Heart right ventricle (tissue), 16 donors: ENCODE measurements at regions of chr16 and their contacts with region 1.

Region 1: DNA sequence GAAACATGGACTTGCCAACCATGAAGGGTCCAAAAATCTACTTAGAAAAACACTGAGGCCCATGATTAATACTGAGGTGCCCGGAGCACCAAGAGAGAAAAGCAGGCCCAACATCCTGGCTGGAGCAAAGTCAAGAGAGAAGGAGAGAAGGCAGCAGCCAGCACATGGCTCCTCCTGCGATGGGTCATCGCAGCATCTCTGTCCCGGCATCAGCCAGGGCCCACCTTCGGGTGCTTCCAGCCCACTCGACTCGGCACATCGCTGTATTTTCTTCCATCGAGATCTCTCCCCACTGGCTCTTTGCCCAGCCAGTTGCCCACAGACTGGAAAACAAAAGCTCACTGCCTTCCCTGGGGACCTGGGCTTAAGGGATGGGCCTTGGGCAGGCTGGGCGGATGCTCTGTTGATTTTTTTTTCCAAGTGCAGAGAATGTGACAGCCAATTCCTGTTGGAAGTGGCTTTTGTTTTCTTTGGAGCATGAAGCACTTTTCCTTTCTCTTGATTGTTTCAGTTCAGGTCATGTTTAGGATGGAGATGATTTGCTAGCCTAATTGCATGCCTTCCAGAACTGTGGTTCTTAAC is 58.1 kb downstream of the CYB5B start:
- DNase-seq: peak; percentile 66 to 85
- ATAC-seq: peak; percentile 80 to 95 (median 87)
- H3K4me3 ChIP-seq: peak overlapping the region in 7 of 10 donors; percentile 17 to 45 (median 32)
- H3K27ac ChIP-seq: peak overlapping the region; percentile 14 to 94 (median 85)
- H3K4me1 ChIP-seq: peaks cover 2 to 33% (median 24%) of the 10 kb centered on the region in 9 donors
- H3K27me3 ChIP-seq: peaks cover 0 to 58% (median 0%) of the 10 kb centered on the region in 7 donors
- CTCF ChIP-seq: peak in 1 of 9 donors; percentile 0

Region 2: DNA sequence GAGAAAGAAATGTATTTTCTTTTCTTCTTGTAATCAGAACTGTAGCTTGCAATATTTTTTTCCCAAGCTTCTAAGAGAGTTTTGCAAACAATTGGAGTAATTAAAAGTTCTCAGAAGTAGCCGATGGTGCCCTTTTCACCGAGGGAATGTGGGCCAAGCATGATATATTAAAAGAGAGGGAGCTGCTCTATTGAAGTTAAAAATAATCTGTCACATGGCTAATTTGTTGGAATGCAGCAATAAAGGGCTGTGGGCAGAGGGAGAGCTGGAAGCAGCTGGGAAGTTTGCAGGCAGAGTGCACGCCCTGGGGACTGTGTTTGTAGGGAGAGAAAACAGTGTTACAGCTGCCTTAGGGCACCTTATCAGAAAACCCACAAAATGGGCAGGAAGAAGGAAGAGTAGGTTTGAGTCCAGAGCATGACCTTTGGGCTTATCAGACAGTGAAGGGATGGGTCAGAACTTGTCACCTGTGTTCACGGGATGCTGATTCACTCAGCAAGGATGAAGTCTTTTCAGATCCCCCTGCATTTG is 78.2 kb before region 1 on chr16:
- intact Hi-C with region 1: loop called in 2 of 10 experiments (anchors 2 to 10 kb)
- DNase-seq: peak in 1 of 2 donors; percentile 27
- ATAC-seq: peak; percentile 65 to 87 (median 80)
- H3K4me3 ChIP-seq: peak overlapping the region in 2 of 10 donors; percentile 8 to 25
- H3K27ac ChIP-seq: peak overlapping the region; percentile 38 to 81 (median 73)
- H3K4me1 ChIP-seq: peaks cover 5 to 50% (median 20%) of the 10 kb centered on the region in 9 donors
- H3K27me3 ChIP-seq: no peaks in the 10 kb centered on the region
- CTCF ChIP-seq: no peak

Region 3: DNA sequence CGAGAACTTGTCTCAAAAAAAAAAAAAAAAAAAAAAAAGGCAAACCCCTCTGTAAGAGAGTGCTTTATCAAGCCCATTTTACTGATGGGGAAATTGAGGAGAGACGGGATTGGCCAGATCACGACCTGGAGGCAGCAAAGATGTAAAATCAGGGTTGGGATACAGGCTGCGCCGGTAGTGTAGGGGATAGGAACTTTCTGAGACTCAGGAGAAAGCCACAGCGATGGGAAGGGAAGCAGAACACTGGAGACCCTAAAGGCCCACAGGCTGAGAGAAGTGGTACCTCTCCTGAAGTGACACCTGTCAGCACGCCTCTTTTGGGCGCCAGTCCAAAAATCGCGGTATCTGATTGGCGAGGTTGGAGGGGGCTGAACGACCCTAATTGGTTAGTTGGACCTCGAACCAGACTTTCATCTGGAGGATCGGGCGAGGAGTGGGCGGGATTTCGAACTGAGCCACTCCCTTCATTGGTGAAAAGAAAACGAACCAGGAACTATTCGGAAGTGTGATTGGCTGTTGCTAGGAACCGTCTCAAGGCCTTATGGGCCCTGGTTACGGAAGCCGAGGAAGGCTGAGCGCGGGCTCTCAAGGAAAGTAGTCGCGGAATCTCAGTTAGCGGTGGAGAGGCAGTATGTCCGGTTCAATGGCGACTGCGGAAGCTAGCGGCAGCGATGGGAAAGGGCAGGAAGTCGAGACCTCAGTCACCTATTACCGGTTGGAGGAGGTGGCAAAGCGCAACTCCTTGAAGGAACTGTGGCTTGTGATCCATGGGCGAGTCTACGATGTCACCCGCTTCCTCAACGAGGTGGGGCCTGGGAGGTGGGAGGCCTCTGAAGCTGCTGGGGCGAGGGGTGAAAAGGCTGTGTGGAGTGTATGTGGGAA is 58.2 kb before region 1 on chr16 and contains the start of gene CYB5B:
- intact Hi-C with region 1: loop called in 2 of 10 experiments (anchors 1 to 10 kb)
- DNase-seq: peak; percentile 87 to 97
- ATAC-seq: peak; percentile 97 to 99 (median 99)
- H3K4me3 ChIP-seq: peak within 1 kb of the TSS; percentile 59 to 94 (median 75)
- H3K27ac ChIP-seq: peak within 1 kb of the TSS; percentile 26 to 93 (median 80)
- H3K4me1 ChIP-seq: peaks cover 0 to 23% (median 17%) of the 10 kb centered on the region in 9 donors
- H3K27me3 ChIP-seq: no peaks in the 10 kb centered on the region
- CTCF ChIP-seq: no peak
- total RNA-seq, gene CYB5B: 59.8 to 84.2 (median 72.5) TPM

Region 4: DNA sequence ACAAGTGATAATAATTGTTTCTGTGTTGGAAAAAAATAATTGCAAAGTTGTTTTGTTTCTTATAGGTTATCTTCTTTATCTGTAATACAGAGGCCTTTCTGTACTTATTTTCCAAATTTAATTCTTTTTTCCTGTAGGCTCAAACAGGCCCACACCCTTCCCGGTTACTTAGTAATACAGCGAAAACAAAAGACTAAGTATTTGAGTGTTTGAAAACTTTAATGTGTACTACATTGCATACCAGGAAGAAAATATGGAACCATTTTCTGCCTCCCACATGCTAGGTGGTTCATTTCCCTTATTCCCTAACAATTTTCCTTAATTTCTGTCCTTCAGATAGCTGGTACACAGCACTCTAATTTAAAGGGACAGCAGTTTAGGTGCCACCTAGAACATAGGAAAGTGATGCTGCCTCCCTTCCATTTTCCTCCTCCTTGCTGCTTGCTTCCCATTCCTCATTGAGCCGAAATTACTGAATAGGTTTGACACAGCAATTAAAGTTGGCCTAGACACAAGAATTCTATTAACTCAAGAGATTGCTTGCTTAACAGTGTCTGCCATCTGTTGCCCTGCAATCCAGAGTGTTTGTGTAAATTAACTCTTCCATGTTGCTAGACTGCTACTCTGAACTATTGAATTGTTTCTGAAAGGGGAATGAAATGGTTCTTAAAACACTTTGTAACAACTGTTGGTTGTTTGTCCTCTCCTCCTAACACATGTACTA is 33.9 kb before region 1 on chr16:
- intact Hi-C with region 1: loop called in 2 of 10 experiments (anchors 5 kb)
- DNase-seq: no peak
- ATAC-seq: peak in 5 of 8 donors; percentile 30 to 54 (median 48)
- H3K4me3 ChIP-seq: no peak overlapping the region
- H3K27ac ChIP-seq: peak overlapping the region; percentile 9 to 81 (median 60)
- H3K4me1 ChIP-seq: peaks cover 6 to 75% (median 37%) of the 10 kb centered on the region in 9 donors
- H3K27me3 ChIP-seq: no peaks in the 10 kb centered on the region
- CTCF ChIP-seq: no peak

Region 5: DNA sequence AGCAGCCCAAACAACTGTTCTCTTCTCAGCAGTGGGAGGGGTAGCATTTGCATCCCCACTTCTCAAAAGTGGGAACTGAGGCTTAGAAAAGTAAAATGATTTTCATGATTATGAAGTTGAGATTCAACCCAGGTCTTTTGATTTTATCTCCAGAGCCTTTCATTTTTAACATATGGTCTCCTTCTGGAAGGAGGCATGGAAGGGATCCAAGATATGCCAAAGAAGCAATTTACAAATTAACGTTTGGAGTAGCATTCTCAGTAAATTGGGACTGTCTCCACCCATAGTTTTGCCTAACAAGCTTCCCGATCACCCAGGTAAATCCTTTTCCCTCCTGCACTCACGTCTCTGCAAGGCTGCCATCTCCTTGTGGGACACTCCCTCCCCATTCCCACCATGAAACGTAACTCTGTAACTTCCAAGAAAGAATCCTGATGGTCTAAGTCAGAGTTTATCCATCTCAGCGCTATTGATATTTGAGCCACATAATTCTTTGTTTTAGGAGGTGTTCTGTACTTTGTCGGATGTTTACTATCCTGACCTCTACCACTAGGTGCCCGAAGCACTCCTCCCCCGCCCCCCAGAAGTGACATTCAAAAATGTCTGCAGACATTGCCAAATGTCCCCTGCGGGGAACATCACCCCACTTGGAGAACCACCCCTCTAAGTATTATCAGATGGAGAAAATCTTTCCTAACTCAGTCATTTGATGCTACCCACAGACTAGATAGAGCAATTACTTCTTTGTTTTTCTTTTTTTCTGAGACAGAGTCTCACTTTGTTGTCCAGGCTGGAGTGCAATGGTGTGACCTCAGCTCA is 50.3 kb after region 1 on chr16:
- intact Hi-C with region 1: loop called in 1 of 10 experiments (anchors 5 kb)
- DNase-seq: no peak
- ATAC-seq: no peak
- H3K4me3 ChIP-seq: no peak overlapping the region
- H3K27ac ChIP-seq: no peak overlapping the region
- H3K4me1 ChIP-seq: peaks cover 0 to 27% (median 3%) of the 10 kb centered on the region in 9 donors
- H3K27me3 ChIP-seq: peaks cover 0 to 10% (median 0%) of the 10 kb centered on the region in 7 donors
- CTCF ChIP-seq: no peak

Region 6: DNA sequence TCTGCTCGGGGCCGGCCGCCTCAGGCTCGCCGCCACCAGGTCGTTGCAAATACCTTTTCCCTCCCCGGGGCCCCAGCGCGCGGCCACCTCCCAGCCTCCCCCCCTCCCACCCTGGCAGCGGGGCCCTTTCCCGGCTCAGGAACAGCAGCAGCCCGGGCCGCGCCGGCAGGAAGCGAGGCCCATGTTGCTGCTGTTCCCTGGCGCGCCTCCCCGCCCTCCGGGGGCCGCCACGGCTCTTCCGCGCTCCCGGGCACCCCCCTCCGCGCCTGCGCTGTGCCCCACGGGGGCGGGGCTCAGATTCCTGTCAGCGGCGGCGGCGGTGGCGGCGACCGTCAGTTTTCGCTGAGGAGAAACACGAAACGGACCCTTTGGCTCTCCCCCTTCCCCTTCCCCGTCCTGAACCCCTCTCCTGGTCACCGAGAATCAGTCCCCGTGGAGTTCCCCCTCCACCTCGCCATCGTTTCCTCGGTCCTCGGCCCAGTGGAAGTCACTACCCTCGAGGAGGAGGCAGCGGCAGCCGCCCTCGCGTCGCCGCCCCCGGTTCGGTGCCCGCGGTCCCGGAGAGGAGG is 83.3 kb after region 1 on chr16 and contains the start of gene NFAT5:
- intact Hi-C with region 1: loop called in 4 of 10 experiments (anchors 1 to 5 kb)
- DNase-seq: peak; percentile 86 to 88
- ATAC-seq: peak; percentile 87 to 95 (median 91)
- H3K4me3 ChIP-seq: peak within 1 kb of the TSS; percentile 75 to 97 (median 90)
- H3K27ac ChIP-seq: peak within 1 kb of the TSS; percentile 96 to 100 (median 98)
- H3K4me1 ChIP-seq: peaks cover 2 to 51% (median 44%) of the 10 kb centered on the region in 9 donors
- H3K27me3 ChIP-seq: no peaks in the 10 kb centered on the region
- CTCF ChIP-seq: peak in 2 of 9 donors; percentile 33 to 37
- total RNA-seq, gene NFAT5: 14.6 to 23.7 (median 21.5) TPM

Region 7: GRCh38 chr16:69848637-69849545 is 366.4 kb after region 1 on chr16:
- intact Hi-C with region 1: no loop called
- DNase-seq: peak; percentile 82 to 93
- ATAC-seq: peak; percentile 96 to 99 (median 99)
- H3K4me3 ChIP-seq: peak overlapping the region in 4 of 10 donors; percentile 2 to 29 (median 12)
- H3K27ac ChIP-seq: peak overlapping the region; percentile 57 to 96 (median 83)
- H3K4me1 ChIP-seq: peaks cover 0 to 38% (median 26%) of the 10 kb centered on the region in 9 donors
- H3K27me3 ChIP-seq: no peaks in the 10 kb centered on the region
- CTCF ChIP-seq: peak in 6 of 9 donors; percentile 17 to 48 (median 26)